ENCODE measurements at regions of chr1 and their contacts with region 1.

Region 1: GRCh38 chr1:150072959-150073358 is 5.4 kb downstream of the VPS45 start:
- DNase-seq: no peak
- H3K4me3 ChIP-seq: no peak overlapping the region
- H3K27ac ChIP-seq: no peak overlapping the region
- H3K4me1 ChIP-seq: peaks cover 0 to 18% (median 10%) of the 10 kb centered on the region in 4 donors
- H3K27me3 ChIP-seq: no peaks in the 10 kb centered on the region
- CTCF ChIP-seq: peak in 3 of 4 experiments; percentile 27 to 44 (median 34)
- EP300 ChIP-seq: no peak
- POLR2A ChIP-seq: no peak

Region 2: GRCh38 chr1:149844101-149844500 is 228.9 kb before region 1 on chr1:
- intact Hi-C with region 1: no loop called
- DNase-seq: no peak
- H3K4me3 ChIP-seq: peak overlapping the region; percentile 35 to 55 (median 44)
- H3K27ac ChIP-seq: peak overlapping the region; percentile 66 to 87 (median 84)
- H3K4me1 ChIP-seq: peaks cover 0 to 35% (median 29%) of the 10 kb centered on the region in 4 donors
- H3K27me3 ChIP-seq: no peaks in the 10 kb centered on the region
- CTCF ChIP-seq: no peak
- EP300 ChIP-seq: no peak
- POLR2A ChIP-seq: no peak

Region 3: GRCh38 chr1:149917571-149918144 is 155.3 kb before region 1 on chr1 and contains the start of gene SV2A:
- intact Hi-C with region 1: no loop called
- DNase-seq: peak; percentile 91
- H3K4me3 ChIP-seq: peak within 1 kb of the TSS; percentile 49 to 68 (median 62)
- H3K27ac ChIP-seq: peak within 1 kb of the TSS in 2 of 4 donors; percentile 41 to 60
- H3K4me1 ChIP-seq: peaks cover 0 to 19% (median 16%) of the 10 kb centered on the region in 4 donors
- H3K27me3 ChIP-seq: no peaks in the 10 kb centered on the region
- CTCF ChIP-seq: no peak
- EP300 ChIP-seq: no peak
- POLR2A ChIP-seq: no peak
- total RNA-seq, gene SV2A: 3.3 to 6.9 (median 5.7) TPM

Region 4: GRCh38 chr1:150061632-150062101 is 11.3 kb before region 1 on chr1:
- intact Hi-C with region 1: no loop called
- DNase-seq: peak; percentile 68
- H3K4me3 ChIP-seq: no peak overlapping the region
- H3K27ac ChIP-seq: peak overlapping the region; percentile 72 to 79 (median 76)
- H3K4me1 ChIP-seq: peaks cover 0 to 35% (median 25%) of the 10 kb centered on the region in 4 donors
- H3K27me3 ChIP-seq: no peaks in the 10 kb centered on the region
- CTCF ChIP-seq: no peak
- EP300 ChIP-seq: peak in 2 of 4 donors; percentile 4 to 30
- POLR2A ChIP-seq: no peak

Region 5: GRCh38 chr1:150168960-150169601 is 96.1 kb after region 1 on chr1:
- intact Hi-C with region 1: loop called (anchors 1 kb)
- DNase-seq: peak; percentile 89
- H3K4me3 ChIP-seq: no peak overlapping the region
- H3K27ac ChIP-seq: no peak overlapping the region
- H3K4me1 ChIP-seq: peaks cover 0 to 25% (median 22%) of the 10 kb centered on the region in 4 donors
- H3K27me3 ChIP-seq: no peaks in the 10 kb centered on the region
- CTCF ChIP-seq: peak; percentile 81 to 86 (median 84)
- EP300 ChIP-seq: no peak
- POLR2A ChIP-seq: no peak